Right cardiac atrium (tissue), 5 donors: ENCODE measurements at regions of chr17 and their contacts with region 1.

Region 1: DNA sequence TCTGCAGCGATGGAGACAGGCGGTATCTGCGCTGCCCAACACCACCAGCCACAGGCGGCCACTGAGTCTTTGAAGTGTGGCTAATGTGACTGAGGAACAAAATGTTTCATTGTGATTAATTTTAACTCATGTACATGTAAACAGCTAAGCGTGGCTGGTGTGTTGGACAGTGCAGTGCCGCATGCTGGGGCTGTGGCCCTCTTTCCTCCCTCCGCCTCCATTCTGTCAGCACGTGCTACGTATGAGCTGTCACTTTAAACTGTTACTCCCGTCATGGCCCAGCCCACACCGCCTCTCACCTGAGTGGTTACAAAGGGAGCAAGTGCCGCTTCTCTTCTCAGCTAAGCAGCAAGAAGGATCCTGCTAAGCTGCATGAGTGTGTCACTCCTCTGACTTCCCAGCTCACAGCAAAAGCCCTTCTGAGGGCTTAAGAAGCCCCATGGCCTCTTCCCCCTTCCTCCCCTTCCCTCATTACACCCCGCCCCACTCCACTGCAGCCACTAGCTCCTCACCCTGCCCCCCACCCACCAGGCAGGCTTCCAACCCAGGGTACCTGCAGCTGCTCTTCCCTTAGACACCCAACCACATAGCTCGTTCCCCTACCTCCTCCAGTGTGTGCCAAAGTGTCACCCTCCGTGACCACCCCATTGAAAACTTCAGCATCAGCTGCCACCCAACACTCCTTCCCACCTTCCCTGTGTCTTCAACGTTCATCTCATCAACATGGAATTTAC is 15.0 kb downstream of the HASPIN start:
- DNase-seq: peak in 2 of 3 donors; percentile 57 to 64
- ATAC-seq: peak; percentile 58 to 66
- H3K4me3 ChIP-seq: no peak overlapping the region
- H3K27ac ChIP-seq: no peak overlapping the region
- H3K4me1 ChIP-seq: no peaks in the 10 kb centered on the region
- H3K27me3 ChIP-seq: no peaks in the 10 kb centered on the region

Region 2: DNA sequence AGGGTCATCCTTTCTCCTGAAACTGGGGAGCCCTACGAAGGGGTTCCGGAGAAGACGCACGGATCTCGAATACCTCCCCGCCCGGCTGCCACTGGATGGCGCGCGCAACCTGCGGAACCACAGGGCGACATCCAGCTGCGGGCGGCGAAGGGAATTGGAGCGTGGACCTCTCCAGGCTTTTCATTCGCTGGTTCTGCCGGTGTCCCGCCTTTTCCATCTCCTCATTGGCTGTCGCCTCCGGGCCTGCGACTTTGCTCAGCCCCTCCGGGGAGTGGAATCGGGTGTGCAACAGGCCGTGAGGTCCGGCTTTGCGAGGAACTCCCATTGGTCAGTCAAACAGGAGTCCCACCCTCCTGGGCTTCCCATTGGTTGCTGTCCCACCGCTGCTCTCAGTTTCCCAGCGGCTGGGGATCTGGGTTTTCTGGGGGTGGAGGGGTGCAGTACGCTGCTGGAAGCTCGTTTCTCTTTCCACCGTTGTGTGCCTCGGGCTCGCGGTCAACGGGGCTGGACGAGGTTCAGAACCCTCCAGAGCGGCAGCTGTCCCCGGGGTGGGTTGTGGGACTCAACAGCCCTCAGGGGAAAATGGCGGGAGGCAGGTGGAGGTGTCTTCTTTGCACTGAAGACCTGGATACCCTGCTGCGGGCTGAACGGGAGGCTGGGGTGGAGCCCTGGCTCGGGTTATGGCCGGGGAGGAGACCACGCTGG is 689.8 kb before region 1 on chr17:
- intact Hi-C with region 1: no loop called
- DNase-seq: peak; percentile 95 to 98 (median 98)
- ATAC-seq: peak; percentile 100
- H3K4me3 ChIP-seq: peak overlapping the region; percentile 66
- H3K27ac ChIP-seq: peak overlapping the region; percentile 65
- H3K4me1 ChIP-seq: no peaks in the 10 kb centered on the region
- H3K27me3 ChIP-seq: no peaks in the 10 kb centered on the region

Region 3: DNA sequence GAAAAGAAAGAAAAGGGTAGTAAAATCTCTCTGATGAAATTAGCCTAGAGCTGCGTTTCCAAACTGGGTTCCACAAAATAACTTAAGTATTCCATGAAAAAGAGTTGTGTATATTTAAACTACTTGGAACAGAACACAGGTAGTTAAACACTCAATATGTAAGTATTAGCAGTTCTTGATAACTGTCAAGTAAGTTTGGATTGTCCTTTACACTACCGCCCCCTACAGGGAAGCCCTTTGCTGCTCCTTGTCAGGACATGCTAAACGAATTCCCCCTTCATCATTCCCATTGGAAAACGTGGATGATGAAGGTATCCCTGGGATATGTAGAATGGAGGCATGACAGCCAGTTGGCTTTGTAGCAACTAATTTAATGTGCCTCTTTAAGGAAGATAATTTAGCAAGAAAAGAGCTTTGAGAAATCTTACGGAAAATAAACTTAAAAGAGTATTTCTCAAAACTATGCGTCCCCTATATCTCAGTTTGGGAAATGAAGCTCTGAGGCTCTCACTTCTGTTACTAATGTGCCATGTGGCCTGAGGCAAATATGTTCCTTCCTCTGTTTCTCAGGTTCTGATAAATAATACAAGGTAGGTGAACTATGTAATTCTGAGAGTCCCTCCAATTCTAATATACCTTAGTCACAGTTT is 88.5 kb after region 1 on chr17:
- intact Hi-C with region 1: loop called in 2 of 4 experiments (anchors 5 to 10 kb)
- DNase-seq: peak in 1 of 3 donors; percentile 64
- ATAC-seq: no peak
- H3K4me3 ChIP-seq: no peak overlapping the region
- H3K27ac ChIP-seq: no peak overlapping the region
- H3K4me1 ChIP-seq: peaks cover 2% of the 10 kb centered on the region
- H3K27me3 ChIP-seq: no peaks in the 10 kb centered on the region